Cardiac septum (tissue), 1 donor: ENCODE measurements at regions of chr10 and their contacts with region 1.

Region 1: DNA sequence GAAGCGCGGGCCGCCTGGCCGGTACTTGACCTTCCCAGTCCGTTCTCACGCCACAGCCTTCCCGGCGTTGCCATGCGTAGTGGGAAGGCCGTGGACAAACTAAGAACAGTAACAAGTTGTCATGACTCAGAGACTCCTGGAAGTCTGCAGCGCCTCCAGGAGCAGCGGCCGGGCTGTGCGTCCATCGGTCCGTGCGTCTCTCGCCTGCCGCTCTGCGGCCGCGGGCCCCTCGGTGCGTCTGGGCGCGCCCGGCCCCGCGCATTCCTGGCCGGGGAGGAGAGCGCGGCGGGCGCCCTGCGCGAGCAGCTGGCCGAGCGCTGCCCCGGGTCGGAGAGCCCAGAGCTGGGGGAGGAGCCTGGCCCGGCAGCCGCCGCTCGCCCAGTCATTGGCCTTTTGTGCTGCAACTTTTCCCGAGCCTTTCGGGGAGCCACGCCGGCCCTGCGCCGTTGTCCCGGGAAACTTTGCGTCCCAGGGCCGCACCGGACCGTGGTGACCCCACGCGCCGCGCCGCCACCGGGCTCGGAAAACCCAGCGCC is 123.7 kb downstream of the TACC2 start:
- DNase-seq: peak; percentile 93

Region 2: GRCh38 chr10:121914661-121915060 is 198.0 kb before region 1 on chr10:
- intact Hi-C with region 1: no loop called
- DNase-seq: no peak

Region 3: GRCh38 chr10:121927841-121928527 is 184.7 kb before region 1 on chr10 and contains the start of gene ATE1:
- intact Hi-C with region 1: loop called (anchors 10 kb)
- DNase-seq: peak; percentile 95
- total RNA-seq, gene ATE1: 38.1 TPM

Region 4: DNA sequence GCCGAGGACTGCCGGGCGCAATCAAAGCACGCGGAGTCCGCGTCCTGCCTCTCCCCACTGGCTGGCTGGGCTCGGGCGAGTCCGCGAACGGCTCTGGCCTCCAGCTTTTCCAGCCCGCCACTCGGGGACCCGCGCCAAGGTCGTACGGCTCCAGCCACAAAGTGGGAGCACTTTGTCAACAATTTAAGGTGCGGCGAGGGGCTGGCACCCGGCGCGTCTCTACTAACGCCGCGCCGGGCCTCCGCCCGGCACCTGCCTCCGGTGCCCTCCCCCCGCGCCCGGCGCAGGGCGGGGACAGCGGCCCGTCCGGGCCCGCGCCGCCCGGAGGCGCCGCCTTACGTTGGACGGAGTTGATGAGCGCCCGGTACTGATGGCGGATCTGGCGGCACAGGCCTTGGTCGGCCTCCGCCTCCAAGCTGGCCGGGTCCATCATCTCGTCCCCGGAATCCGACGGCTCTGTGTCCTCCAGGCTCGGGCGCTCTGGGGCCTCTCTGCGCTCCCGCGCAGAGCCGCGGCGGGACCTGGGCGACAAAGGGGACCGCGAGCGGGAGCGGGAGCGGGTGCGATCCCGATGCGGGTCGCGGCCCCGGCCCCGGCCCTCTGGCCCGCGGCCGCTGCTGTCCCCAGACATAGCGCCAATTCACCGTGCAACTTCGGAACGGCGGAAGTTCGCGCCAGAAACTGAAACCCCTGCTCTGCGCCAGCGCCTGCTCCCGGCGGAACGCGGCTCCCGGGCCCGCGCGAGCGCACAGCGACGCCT is 138.0 kb before region 1 on chr10 and contains the start of gene NSMCE4A:
- intact Hi-C with region 1: loop called (anchors 2 kb)
- DNase-seq: peak; percentile 91
- total RNA-seq, gene NSMCE4A: 29.0 TPM

Region 5: GRCh38 chr10:122051251-122051996 is 61.3 kb before region 1 on chr10:
- intact Hi-C with region 1: loop called (anchors 1 kb)
- DNase-seq: no peak

Region 6: GRCh38 chr10:122062831-122063674 is 49.6 kb before region 1 on chr10:
- intact Hi-C with region 1: loop called (anchors 1 kb)
- DNase-seq: peak; percentile 86

Region 7: DNA sequence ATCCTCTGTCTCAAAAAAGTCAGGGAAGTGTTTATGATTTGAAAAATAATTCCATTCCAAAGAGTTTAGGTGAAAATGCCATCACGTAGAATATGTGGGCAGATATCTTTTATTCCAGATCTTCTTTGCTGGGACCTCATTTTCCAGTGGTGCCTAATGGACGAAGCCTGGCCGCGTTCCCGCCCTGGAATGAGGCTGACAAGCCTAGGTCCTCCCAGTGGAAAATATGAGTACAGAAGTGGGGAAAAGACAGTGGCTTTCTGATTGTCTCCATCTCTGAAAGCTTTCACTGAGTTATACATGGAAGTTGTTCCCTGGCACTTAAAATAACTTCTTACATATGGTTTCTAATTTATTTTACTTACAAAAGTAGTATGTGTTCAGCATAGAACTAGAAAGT is 15.7 kb after region 1 on chr10:
- intact Hi-C with region 1: loop called (anchors 2 kb)
- DNase-seq: no peak